ENCODE measurements at regions of chr1 and their contacts with region 1.

Region 1: DNA sequence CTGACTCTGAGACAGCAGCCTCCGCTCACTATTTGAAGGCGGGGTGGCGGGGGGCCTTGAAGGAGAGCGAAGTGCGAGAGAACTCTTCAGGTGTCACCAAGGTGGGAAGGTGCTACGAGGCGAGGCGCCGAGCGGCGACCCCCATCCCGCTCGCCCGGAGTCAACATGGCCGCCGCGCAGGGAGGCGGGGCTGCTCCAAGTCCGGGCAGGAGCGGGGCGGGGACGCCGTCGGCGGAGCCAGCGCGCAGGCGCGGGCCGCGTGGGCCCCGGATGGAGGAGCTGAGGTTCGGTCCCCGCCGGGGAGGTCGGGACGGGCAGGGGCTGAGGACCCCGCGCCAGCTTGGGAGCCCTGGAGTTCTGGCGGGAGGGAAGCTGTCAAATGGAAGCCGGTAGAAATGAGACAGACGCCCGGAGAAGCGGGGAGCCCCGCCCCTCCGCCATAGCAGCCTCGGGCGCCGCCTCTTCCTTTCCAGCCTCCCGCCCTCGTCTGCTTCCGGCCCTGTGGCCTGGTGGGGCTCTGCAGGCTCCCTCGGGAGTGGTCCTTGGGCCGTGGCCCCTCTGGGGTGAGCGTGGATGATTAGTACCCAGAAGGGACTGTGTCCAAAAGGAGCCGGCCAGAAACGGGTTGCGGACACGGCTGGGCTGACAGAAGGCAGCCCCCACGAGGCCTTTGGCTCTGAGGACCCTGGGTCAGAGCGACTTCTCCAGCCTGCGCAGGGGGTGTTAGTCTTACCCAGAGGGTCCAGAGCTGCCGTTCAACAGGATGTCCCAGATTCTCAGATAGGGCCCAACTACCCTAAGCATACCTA is at the start of gene PIGV:
- DNase-seq: peak; percentile 94 to 97 (median 96)
- ATAC-seq: peak; percentile 76
- H3K4me3 ChIP-seq: peak within 1 kb of the TSS; percentile 66
- H3K27ac ChIP-seq: peak within 1 kb of the TSS; percentile 98
- H3K4me1 ChIP-seq: peaks cover 61 to 81% of the 10 kb centered on the region in 2 experiments
- H3K27me3 ChIP-seq: no peaks in the 10 kb centered on the region
- CTCF ChIP-seq: no peak
- EP300 ChIP-seq: no peak
- POLR2A ChIP-seq: peak; percentile 88
- RAD21 ChIP-seq: no peak; a peak in 2 of 4 replicates
- polyA plus RNA-seq, gene PIGV: 11.3 to 11.7 TPM

Region 2: GRCh38 chr1:26500488-26501175 is 287.3 kb before region 1 on chr1:
- CTCF ChIA-PET with region 1: interaction called, 9 read pairs
- POLR2A ChIA-PET with region 1: interaction called, 4 read pairs
- in situ Hi-C with region 1: no loop called
- intact Hi-C with region 1: loop called (anchors 1 kb)
- DNase-seq: peak; percentile 92 to 97 (median 96)
- ATAC-seq: peak; percentile 85
- H3K4me3 ChIP-seq: peak overlapping the region; percentile 55
- H3K27ac ChIP-seq: peak overlapping the region; percentile 83
- H3K4me1 ChIP-seq: peaks cover 13 to 29% of the 10 kb centered on the region in 2 experiments
- H3K27me3 ChIP-seq: no peaks in the 10 kb centered on the region
- CTCF ChIP-seq: no peak
- EP300 ChIP-seq: no peak; the same call in 1 of the 2 replicates
- POLR2A ChIP-seq: no peak
- RAD21 ChIP-seq: no peak

Region 3: GRCh38 chr1:26608895-26609294 is 179.0 kb before region 1 on chr1:
- CTCF ChIA-PET with region 1: interaction called, 80 read pairs
- POLR2A ChIA-PET with region 1: interaction called, 30 read pairs
- in situ Hi-C with region 1: no loop called
- intact Hi-C with region 1: no loop called
- DNase-seq: no peak
- ATAC-seq: peak; percentile 58
- H3K4me3 ChIP-seq: no peak overlapping the region
- H3K27ac ChIP-seq: no peak overlapping the region
- H3K4me1 ChIP-seq: peaks cover 3 to 7% of the 10 kb centered on the region in 2 experiments; a peak in 4 of 5 replicates
- H3K27me3 ChIP-seq: no peaks in the 10 kb centered on the region
- CTCF ChIP-seq: peak in 2 of 3 experiments; percentile 2 to 54; a peak in 3 of 6 replicates
- EP300 ChIP-seq: no peak
- POLR2A ChIP-seq: no peak
- RAD21 ChIP-seq: peak; percentile 46 to 71

Region 4: DNA sequence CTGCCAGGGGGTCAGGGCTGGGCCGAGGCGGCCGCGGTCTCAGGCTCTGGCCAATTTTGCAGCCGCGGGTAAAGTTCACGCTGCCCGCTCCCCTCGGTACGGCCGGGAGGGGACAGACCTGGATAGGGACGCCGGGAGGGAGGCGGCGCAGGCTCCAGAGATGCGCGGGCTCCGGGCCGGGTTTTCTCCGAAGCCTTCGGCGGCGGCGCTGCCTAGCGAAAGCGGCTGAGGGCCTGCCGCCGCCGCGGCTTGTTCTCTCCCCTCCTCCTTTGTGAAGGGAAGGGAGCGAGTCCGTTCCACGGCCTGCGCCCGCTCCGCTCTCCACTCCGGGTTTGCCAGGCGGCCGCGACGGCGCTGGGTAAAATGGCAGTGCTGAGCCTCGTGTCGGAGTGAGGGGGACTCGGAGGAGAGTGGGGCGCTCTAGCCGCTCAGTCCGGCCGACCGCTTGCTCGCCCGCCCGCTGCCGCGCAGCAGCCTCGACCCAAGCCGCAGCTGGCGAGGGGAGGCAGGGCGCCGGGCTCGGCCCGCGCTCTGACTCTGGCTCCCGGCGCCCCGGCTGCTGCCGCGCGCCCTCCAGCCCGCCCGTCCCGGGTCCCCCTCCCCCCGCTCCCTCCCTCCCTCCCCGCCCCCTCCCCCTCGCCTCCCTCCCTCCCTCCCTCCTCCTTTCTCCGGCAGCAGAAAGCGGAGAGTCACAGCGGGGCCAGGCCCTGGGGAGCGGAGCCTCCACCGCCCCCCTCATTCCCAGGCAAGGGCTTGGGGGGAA is 92.4 kb before region 1 on chr1 and contains the start of gene ARID1A:
- CTCF ChIA-PET with region 1: no interaction called
- POLR2A ChIA-PET with region 1: interaction called, 112 read pairs
- in situ Hi-C with region 1: no loop called
- intact Hi-C with region 1: loop called (anchors 1 kb)
- DNase-seq: peak; percentile 83 to 98 (median 88)
- ATAC-seq: peak; percentile 74
- H3K4me3 ChIP-seq: peak within 1 kb of the TSS; percentile 79
- H3K27ac ChIP-seq: peak within 1 kb of the TSS; percentile 92
- H3K4me1 ChIP-seq: peaks cover 43 to 47% of the 10 kb centered on the region in 2 experiments
- H3K27me3 ChIP-seq: no peaks in the 10 kb centered on the region
- CTCF ChIP-seq: peak in 1 of 3 experiments; percentile 14; a peak in 1 of 6 replicates
- EP300 ChIP-seq: peak; percentile 80
- POLR2A ChIP-seq: peak; percentile 90
- RAD21 ChIP-seq: peak; percentile 62 to 68
- polyA plus RNA-seq, gene ARID1A: 8.3 to 20.2 TPM

Region 5: DNA sequence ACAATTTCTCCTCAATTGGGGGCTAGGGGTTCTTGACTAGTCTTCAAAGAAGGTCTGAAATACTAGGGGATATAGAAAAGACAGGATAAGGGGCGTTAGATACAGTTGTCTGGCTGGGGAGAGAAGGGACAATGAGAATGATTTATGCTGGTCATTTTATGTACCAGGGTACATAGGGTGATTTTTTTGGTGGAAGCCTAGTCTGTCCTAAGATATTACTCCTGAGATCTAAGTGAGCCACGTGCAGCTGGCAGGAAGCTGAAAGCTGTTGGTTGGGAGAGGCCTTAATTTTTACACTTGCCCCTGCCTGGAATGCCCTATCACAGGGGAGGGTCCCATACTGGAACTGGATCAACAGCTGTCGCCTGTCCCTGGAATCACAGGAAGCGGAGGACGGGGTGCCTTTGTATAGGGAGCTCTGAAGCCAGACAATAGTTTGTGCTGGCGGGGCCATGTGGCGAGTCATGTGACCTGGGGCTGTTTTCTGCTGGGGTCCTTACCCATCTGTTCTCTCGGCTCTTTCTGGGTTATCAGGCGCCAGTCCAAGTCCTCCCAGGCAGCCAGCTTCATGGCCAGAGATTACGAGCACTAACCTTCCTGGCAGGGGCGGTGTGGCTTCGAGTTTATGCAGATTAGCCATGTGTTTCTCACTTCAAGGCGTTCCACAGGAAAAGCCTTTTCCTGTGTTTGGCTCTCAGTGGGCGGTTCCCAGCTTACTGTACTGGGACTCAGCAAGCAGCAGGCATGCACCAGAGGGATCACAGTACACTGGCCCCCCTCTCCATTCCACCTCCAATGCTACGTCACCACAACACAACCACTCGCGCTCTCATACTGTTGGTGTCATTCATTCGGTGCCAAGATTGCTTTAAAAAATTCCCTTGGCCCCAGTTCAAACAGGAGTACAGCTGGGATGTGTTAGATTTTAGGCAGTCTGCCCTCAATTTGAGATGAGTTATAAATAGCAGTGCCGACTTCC is 64.6 kb before region 1 on chr1:
- CTCF ChIA-PET with region 1: no interaction called
- POLR2A ChIA-PET with region 1: interaction called, 9 read pairs
- in situ Hi-C with region 1: no loop called
- intact Hi-C with region 1: loop called (anchors 2 kb)
- DNase-seq: peak; percentile 84 to 99 (median 91)
- ATAC-seq: peak; percentile 90
- H3K4me3 ChIP-seq: peak overlapping the region; percentile 19; the same call in 1 of the 2 replicates
- H3K27ac ChIP-seq: peak overlapping the region; percentile 77
- H3K4me1 ChIP-seq: peaks cover 38 to 63% of the 10 kb centered on the region in 2 experiments
- H3K27me3 ChIP-seq: no peaks in the 10 kb centered on the region
- CTCF ChIP-seq: peak; percentile 5 to 31 (median 10); a peak in 2 of 6 replicates
- EP300 ChIP-seq: peak; percentile 69; the same call in 1 of the 2 replicates
- POLR2A ChIP-seq: no peak; the same call in 1 of the 2 replicates
- RAD21 ChIP-seq: peak in 1 of 2 experiments; percentile 43; a peak in 3 of 4 replicates

Region 6: DNA sequence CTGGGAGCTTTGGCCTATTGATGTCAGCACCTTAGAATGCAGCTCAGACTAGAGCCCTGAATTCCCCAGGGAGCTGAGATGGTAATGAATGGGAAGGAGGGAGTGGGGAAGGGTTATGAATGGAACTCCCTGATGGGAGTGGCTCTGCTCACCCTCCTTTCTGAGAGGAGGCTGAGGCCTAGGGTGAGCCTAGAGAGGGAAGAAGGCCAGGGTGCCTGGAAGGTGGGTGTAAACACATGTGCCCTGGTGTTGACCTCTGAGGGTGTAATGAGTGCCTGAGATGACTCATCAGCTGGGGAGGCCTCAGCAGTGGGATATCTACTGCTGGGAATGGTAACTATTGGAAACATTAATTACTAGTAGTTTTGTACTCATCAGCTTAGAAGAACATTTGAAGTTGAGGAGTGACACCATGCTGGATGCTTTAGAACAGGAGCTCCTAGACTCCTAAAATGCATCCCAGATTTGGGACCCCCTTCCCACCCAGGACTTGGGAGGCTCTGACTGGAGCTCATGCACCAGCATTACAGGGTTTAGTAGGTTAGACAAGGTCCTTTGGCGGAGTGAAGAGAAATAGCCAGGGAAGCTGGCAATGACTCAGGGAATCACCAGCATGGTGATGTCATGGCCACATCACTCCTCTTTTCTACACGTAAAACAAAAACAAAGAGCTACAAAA is 16.1 kb before region 1 on chr1:
- CTCF ChIA-PET with region 1: no interaction called
- POLR2A ChIA-PET with region 1: interaction called, 99 read pairs
- in situ Hi-C with region 1: no loop called
- intact Hi-C with region 1: no loop called
- DNase-seq: peak; percentile 87 to 96 (median 93)
- ATAC-seq: peak; percentile 96
- H3K4me3 ChIP-seq: no peak overlapping the region
- H3K27ac ChIP-seq: peak overlapping the region; percentile 76
- H3K4me1 ChIP-seq: peaks cover 21 to 22% of the 10 kb centered on the region in 2 experiments
- H3K27me3 ChIP-seq: no peaks in the 10 kb centered on the region
- CTCF ChIP-seq: no peak
- EP300 ChIP-seq: peak; percentile 72
- POLR2A ChIP-seq: no peak; the same call in none of the 2 replicates
- RAD21 ChIP-seq: peak; percentile 10 to 38; a peak in 2 of 4 replicates

Region 7: GRCh38 chr1:26874896-26875295 is 87.0 kb after region 1 on chr1:
- CTCF ChIA-PET with region 1: no interaction called
- POLR2A ChIA-PET with region 1: interaction called, 3 read pairs
- in situ Hi-C with region 1: no loop called
- intact Hi-C with region 1: loop called (anchors 5 kb)
- DNase-seq: no peak
- ATAC-seq: no peak
- H3K4me3 ChIP-seq: no peak overlapping the region
- H3K27ac ChIP-seq: no peak overlapping the region
- H3K4me1 ChIP-seq: no peaks in the 10 kb centered on the region
- H3K27me3 ChIP-seq: no peaks in the 10 kb centered on the region
- CTCF ChIP-seq: no peak
- EP300 ChIP-seq: no peak
- POLR2A ChIP-seq: no peak
- RAD21 ChIP-seq: no peak

Region 8: DNA sequence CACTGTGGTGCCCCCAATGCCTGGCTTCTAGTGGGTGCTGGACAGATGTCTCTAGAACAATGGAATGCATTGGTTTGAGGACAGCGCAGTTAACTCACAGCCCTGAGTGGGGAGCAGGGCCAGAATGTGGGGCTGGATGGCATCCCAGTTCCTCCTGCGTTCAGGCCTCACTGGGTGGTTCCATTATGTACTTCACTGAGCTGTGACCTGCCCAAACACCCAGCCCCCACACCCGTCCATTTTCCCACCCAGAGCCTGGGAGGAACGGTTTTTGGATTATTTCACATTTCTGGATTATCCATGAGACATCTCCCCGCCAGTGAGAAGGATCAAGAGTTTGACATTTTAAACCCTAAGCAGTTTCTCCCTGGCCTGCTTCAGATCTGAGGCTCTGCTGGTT is 757.4 kb after region 1 on chr1:
- CTCF ChIA-PET with region 1: no interaction called
- POLR2A ChIA-PET with region 1: no interaction called
- in situ Hi-C with region 1: no loop called
- intact Hi-C with region 1: no loop called
- DNase-seq: no peak
- ATAC-seq: no peak
- H3K4me3 ChIP-seq: no peak overlapping the region
- H3K27ac ChIP-seq: peak overlapping the region; percentile 97; the same call in 1 of the 3 replicates
- H3K4me1 ChIP-seq: peaks cover 42 to 76% of the 10 kb centered on the region in 2 experiments
- H3K27me3 ChIP-seq: no peaks in the 10 kb centered on the region
- CTCF ChIP-seq: no peak
- EP300 ChIP-seq: no peak
- POLR2A ChIP-seq: no peak
- RAD21 ChIP-seq: no peak

Measured in K562 (cell line).